H1 (cell line): ENCODE measurements at regions of chr7 and their contacts with region 1.

Region 1: DNA sequence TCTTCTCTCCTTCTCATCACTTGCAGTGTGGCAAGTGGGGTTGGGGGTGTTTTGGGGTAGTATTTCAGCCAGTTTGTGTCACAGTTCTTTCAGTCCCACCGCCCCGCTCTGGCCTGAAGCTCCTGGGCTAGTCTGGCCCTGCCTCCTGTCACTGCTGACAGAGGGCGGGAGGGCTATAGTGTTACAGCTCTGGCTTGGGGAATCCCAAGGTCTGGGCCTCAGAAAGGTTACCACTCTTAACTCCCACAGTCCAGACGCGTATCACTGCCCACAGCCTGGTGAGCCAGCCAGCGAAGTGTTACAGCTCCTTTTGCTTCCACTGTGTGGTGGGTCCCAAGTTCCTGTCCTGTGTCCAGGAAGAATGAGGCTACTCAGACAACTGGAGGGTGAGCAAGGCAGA is 56.0 kb downstream of the ZNF777 start:
- DNase-seq: no peak
- H3K4me3 ChIP-seq: no peak overlapping the region
- H3K27ac ChIP-seq: no peak overlapping the region
- H3K4me1 ChIP-seq: peaks cover 0 to 2% (median 0%) of the 10 kb centered on the region in 4 experiments; a peak in 3 of 7 replicates
- H3K27me3 ChIP-seq: no peaks in the 10 kb centered on the region; a peak in 1 of 7 replicates
- CTCF ChIP-seq: no peak
- EP300 ChIP-seq: no peak
- POLR2A ChIP-seq: no peak
- RAD21 ChIP-seq: no peak

Region 2: GRCh38 chr7:149254181-149254858 is 150.5 kb before region 1 on chr7:
- CTCF ChIA-PET with region 1: interaction called, 13 read pairs
- POLR2A ChIA-PET with region 1: no interaction called
- DNase-seq: no peak
- H3K4me3 ChIP-seq: no peak overlapping the region
- H3K27ac ChIP-seq: no peak overlapping the region
- H3K4me1 ChIP-seq: no peaks in the 10 kb centered on the region
- H3K27me3 ChIP-seq: no peaks in the 10 kb centered on the region
- CTCF ChIP-seq: no peak
- EP300 ChIP-seq: no peak
- POLR2A ChIP-seq: no peak
- RAD21 ChIP-seq: no peak

Region 3: DNA sequence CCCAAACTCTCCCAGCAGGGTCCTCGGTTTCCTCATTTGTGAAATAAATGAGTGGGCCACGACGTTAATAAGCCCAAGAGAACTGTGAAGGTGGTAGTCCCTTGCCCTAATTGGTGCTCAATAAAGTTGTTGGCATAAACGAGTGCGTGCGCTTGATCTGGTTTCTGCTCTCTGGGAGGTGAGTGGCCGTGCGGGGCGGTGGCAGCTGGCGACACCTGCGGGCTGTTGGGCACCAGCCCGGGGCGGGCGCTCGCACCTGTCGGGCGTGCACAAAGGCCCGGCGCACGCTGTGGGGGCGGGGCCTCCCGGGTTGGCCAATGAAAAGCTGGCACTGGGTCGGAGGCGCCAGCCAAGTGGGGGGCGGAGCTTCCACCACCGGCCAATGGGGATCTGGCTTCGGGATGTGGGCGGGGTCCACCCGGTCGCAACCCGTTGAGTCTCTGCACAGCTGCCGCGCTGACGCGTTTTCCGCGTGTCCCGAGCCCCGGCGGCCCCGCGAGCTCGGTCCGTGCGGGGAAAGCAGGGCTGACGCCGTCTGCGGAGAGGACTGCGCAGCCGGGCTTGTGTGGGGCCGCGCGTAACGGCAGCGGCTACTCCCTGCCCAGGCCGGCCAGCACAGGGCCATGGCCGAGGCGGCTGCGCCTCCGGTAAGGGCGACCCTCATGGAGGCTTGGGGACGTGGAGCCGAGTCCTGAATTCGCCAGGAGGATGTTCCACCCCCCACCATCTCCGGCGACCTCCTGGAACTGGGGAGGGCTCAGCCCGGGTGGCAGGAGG is 119.8 kb before region 1 on chr7:
- CTCF ChIA-PET with region 1: interaction called, 17 read pairs
- POLR2A ChIA-PET with region 1: interaction called, 6 read pairs
- DNase-seq: peak; percentile 73 to 100
- H3K4me3 ChIP-seq: peak overlapping the region; percentile 73 to 79 (median 74)
- H3K27ac ChIP-seq: no peak overlapping the region
- H3K4me1 ChIP-seq: peaks cover 0 to 6% (median 4%) of the 10 kb centered on the region in 4 experiments; a peak in 5 of 7 replicates
- H3K27me3 ChIP-seq: peaks cover 0 to 8% (median 4%) of the 10 kb centered on the region in 4 experiments; a peak in 3 of 7 replicates
- CTCF ChIP-seq: peak; percentile 15 to 37 (median 36); a peak in 2 of 4 replicates
- EP300 ChIP-seq: no peak
- POLR2A ChIP-seq: peak in 1 of 2 experiments; percentile 61; a peak in 1 of 3 replicates
- RAD21 ChIP-seq: peak; percentile 23 to 44; a peak in 3 of 4 replicates

Region 4: DNA sequence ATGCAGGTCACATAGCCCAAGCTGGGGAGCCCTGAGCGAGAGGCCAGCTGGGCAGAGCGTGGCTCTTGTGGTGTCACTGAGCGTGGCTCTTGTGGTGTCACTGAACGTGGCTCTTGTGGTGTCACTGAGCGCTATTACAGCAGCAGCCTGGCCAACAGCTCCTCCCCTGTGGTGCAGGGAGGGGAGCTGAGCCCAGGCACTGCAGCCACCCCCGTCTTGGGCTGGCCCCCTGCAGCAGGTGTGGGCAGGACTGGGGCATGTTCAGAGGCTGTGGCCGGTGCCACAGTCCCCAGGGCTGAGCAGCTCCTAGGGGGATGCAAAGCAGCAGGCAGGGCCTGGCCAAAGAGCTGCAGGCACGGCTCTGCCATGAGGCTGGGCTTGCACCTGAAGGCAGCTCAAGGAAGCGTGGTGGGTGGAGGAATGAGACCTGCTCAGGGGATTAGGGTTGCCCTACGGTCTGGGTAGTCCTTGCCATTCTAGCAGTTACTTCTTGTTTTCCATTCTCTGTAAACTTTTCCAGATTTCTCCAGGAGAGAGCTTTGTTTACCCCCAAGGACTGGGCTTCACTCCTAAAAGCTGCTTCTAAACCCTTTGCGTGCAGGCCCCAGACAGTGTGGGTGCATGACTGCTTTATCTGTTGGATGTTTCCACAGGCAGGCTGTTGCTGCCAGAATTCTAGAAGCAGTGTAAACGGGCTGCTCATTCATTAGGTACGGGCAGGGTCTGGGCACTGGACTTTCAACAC is 113.6 kb before region 1 on chr7:
- CTCF ChIA-PET with region 1: interaction called, 17 read pairs
- POLR2A ChIA-PET with region 1: no interaction called
- DNase-seq: no peak
- H3K4me3 ChIP-seq: no peak overlapping the region
- H3K27ac ChIP-seq: no peak overlapping the region
- H3K4me1 ChIP-seq: peaks cover 0 to 3% (median 0%) of the 10 kb centered on the region in 4 experiments; a peak in 1 of 7 replicates
- H3K27me3 ChIP-seq: no peaks in the 10 kb centered on the region
- CTCF ChIP-seq: no peak
- EP300 ChIP-seq: no peak
- POLR2A ChIP-seq: no peak
- RAD21 ChIP-seq: no peak

Region 5: DNA sequence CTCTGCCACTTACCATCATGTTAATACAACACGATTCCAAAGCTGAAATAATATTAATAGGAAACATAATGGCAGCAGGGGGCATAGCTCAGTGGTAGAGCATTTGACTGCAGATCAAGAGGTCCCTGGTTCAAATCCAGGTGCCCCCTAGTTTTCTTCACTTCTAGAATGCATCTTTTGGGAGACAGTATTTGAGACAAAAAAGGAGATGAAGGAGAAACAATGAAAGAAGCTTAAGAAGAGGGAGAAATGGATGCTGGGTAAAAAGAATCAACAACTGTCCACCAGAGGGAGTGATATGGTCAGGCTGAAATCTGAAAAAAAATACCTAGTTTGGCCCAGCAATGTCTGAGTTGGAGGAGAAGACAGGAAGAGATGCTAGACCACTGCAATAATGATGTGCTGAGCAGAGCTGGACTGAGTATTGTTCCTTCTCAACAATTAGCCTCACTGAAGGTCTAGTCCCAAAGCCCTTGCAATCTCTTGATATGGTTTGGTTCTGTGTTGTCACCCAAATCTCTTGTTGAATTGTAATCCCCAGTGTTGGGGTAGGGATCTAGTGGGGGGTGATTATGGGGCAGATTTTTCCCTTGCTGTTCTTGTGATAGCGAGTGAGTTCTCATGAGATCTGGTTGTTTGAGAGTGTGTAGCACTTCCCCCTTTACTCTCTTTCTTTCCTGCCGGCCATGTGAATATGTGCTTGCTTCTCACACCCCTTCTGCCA is 94.5 kb before region 1 on chr7:
- CTCF ChIA-PET with region 1: interaction called, 82 read pairs
- POLR2A ChIA-PET with region 1: interaction called, 3 read pairs
- DNase-seq: no peak
- H3K4me3 ChIP-seq: no peak overlapping the region
- H3K27ac ChIP-seq: no peak overlapping the region
- H3K4me1 ChIP-seq: no peaks in the 10 kb centered on the region
- H3K27me3 ChIP-seq: no peaks in the 10 kb centered on the region
- CTCF ChIP-seq: peak in 2 of 3 experiments; percentile 51 to 68; a peak in 2 of 4 replicates
- EP300 ChIP-seq: no peak
- POLR2A ChIP-seq: no peak
- RAD21 ChIP-seq: peak; percentile 63 to 66

Region 6: DNA sequence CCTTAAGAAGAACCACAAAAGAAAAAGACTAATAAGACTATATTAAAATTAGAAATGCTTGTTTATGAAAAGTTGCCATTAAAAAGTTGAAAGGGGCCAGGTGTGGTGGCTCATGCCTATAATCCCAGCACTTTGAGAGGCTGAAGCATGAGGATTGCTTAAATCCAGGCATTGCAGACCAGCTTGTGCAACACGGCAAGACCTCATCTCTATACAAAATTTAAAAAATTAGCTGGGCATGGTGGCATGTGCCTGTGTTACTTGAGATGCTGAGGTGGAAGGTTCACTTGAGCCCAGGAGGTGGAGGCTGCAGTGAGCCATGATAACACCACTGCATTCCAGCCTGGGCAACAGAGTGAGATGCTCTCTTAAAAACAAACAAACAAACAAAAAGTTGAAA is 12.4 kb before region 1 on chr7:
- CTCF ChIA-PET with region 1: interaction called, 19 read pairs
- POLR2A ChIA-PET with region 1: no interaction called
- DNase-seq: no peak
- H3K4me3 ChIP-seq: no peak overlapping the region
- H3K27ac ChIP-seq: no peak overlapping the region
- H3K4me1 ChIP-seq: no peaks in the 10 kb centered on the region
- H3K27me3 ChIP-seq: no peaks in the 10 kb centered on the region
- CTCF ChIP-seq: no peak
- EP300 ChIP-seq: no peak
- POLR2A ChIP-seq: no peak
- RAD21 ChIP-seq: no peak